ENCODE measurements at regions of chr12 and their contacts with region 1.

Region 1: GRCh38 chr12:130838951-130839769 is at the start of gene STX2:
- DNase-seq: peak; percentile 52 to 79 (median 77)
- H3K4me3 ChIP-seq: peak within 1 kb of the TSS; percentile 35 to 76 (median 49)
- H3K4me3 Mint-ChIP-seq: peak within 1 kb of the TSS; percentile 73 to 87
- H3K27ac ChIP-seq: no peak within 1 kb of the TSS
- H3K27ac Mint-ChIP-seq: peak within 1 kb of the TSS in 6 of 7 donors; percentile 25 to 88 (median 66)
- H3K4me1 ChIP-seq: peaks cover 17 to 22% of the 10 kb centered on the region in 2 donors
- H3K4me1 Mint-ChIP-seq: peaks cover 27% of the 10 kb centered on the region
- H3K27me3 ChIP-seq: peaks cover 0 to 5% of the 10 kb centered on the region in 2 donors
- H3K27me3 Mint-ChIP-seq: peaks cover 8 to 11% (median 10%) of the 10 kb centered on the region in 3 donors
- CTCF ChIP-seq: no peak
- polyA plus RNA-seq, gene STX2: 4.8 to 32.9 (median 7.6) TPM

Region 2: GRCh38 chr12:130775953-130776856 is 63.0 kb before region 1 on chr12:
- intact Hi-C with region 1: no loop called
- DNase-seq: no peak
- H3K4me3 ChIP-seq: peak overlapping the region in 1 of 3 experiments; percentile 60
- H3K4me3 Mint-ChIP-seq: peak overlapping the region; percentile 64 to 90
- H3K27ac ChIP-seq: no peak overlapping the region
- H3K27ac Mint-ChIP-seq: no peak overlapping the region
- H3K4me1 ChIP-seq: peaks cover 8 to 11% of the 10 kb centered on the region in 2 donors
- H3K4me1 Mint-ChIP-seq: peaks cover 15% of the 10 kb centered on the region
- H3K27me3 ChIP-seq: peaks cover 4 to 24% of the 10 kb centered on the region in 2 donors
- H3K27me3 Mint-ChIP-seq: peaks cover 36 to 44% (median 38%) of the 10 kb centered on the region in 3 donors
- CTCF ChIP-seq: no peak

Region 3: DNA sequence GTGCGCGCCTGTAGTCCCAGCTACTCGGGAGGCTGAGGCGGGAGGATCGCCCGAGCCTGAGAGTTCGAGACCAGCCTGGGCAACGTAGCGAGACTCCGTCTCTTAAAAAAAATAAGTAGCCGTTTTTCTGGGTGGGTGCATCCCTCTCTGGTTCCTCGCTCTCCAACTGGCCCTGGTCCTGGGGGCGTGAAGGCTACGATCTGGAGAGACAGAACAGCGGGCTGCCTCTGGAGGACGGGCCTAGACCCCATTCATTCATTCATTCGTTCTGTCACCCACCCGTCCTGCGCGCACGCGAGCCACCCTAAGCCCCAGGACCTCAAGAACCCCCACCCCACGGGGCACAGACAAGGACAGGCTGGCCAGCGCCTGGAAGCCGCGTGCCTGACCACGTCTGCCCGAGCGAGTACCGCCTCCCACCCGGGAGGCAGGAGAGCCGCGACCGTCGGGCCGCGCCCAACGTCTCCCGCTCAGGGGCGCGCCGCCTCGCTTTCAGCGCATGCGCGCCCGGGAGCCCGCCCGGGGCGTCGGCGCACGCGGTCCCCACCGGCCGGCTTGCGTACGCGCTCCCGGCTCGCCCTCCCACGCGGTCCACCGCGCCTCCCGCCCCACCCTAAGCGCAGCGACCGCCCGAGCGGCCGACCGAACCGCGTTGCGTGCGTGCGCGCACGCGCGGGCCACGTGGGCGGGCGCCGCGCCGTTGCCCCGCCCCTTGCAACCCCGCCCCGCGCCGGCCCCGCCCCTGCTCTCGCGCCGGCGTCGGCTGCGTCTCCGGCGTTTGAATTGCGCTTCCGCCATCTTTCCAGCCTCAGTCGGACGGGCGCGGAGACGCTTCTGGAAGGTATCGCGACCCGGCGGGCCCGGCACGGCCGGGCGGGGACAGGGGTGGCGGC is 32.4 kb after region 1 on chr12 and contains the start of gene RAN:
- intact Hi-C with region 1: loop called (anchors 1 to 5 kb)
- DNase-seq: peak; percentile 86 to 91 (median 87)
- H3K4me3 ChIP-seq: peak within 1 kb of the TSS; percentile 63 to 97 (median 81)
- H3K4me3 Mint-ChIP-seq: peak within 1 kb of the TSS; percentile 76 to 92
- H3K27ac ChIP-seq: peak within 1 kb of the TSS; percentile 67 to 84
- H3K27ac Mint-ChIP-seq: peak within 1 kb of the TSS; percentile 86 to 95 (median 92)
- H3K4me1 ChIP-seq: peaks cover 17 to 30% of the 10 kb centered on the region in 2 donors
- H3K4me1 Mint-ChIP-seq: peaks cover 27% of the 10 kb centered on the region
- H3K27me3 ChIP-seq: no peaks in the 10 kb centered on the region
- H3K27me3 Mint-ChIP-seq: peaks cover 0 to 4% (median 0%) of the 10 kb centered on the region in 3 donors
- CTCF ChIP-seq: no peak
- polyA plus RNA-seq, gene RAN: 197 to 443 (median 366) TPM